ENCODE measurements at regions of chr6 and their contacts with region 1.

Region 1: DNA sequence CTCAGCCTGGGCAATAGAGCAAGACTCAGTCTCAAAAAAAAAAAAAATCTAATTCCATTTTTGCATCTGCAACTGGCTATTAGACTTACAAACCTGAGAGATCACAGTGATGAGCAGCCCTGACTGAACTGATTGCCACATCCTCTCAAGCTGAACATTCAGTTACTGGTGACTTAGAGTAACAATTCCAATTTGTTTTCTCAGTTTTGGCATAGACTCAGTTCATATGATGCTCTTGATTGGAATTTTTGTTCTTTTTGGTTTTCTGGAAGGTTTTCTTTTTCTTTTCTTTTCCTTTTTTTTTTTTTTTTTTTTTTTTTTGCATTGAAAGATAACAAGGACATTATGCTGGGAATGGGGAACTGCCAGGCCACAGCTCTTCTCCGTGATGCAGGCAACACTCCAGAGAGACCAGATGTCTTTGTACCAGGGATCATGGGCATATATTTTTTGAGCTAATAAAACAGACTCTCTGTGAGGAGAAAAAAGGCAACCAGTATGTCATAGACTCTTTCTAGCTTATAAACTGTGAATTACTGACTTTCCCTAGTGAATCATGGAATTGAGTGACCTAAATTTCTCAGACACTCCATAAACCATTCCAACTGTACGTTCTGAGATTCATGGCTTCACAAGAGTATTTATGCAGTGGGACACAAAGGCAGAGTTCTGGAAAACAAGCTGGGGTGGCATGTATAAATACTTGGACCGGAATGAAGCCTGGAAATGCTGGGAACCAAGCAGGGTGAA is 86.0 kb upstream of the SLC2A12 start:
- DNase-seq: peak in 1 of 2 donors; percentile 25
- H3K4me3 ChIP-seq: no peak overlapping the region
- CTCF ChIP-seq: no peak
- POLR2A ChIP-seq: no peak

Region 2: GRCh38 chr6:133218852-133219251 is 919.5 kb before region 1 on chr6:
- intact Hi-C with region 1: loop called (anchors 10 kb)
- DNase-seq: no peak
- H3K4me3 ChIP-seq: no peak overlapping the region
- CTCF ChIP-seq: no peak
- POLR2A ChIP-seq: no peak

Region 3: GRCh38 chr6:133701633-133702331 is 436.6 kb before region 1 on chr6:
- intact Hi-C with region 1: no loop called
- DNase-seq: no peak
- H3K4me3 ChIP-seq: no peak overlapping the region
- CTCF ChIP-seq: no peak
- POLR2A ChIP-seq: no peak